Calu3 (cell line): ENCODE measurements at regions of chr11 and their contacts with region 1.

Region 1: DNA sequence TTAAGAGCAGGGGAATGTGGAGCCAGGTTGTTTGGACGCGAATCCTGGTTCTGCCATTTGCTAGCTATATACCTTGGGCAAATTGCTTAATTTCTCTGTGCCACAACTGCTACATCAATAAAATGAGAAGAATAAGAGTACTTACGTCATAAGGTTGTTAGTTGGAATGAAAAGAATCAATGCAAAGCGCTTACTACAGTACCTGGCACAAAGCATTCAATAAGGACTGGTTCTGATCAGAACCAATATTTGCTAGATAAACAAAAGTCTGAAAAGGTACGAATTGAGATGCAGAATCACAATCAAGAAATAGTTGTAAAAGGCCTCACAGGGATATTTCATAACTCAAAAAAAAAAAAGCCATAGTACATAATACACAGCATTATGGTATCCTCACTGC is 11.2 kb downstream of the AMBRA1 start:
- DNase-seq: no peak
- H3K4me3 Mint-ChIP-seq: no peak overlapping the region
- H3K27ac Mint-ChIP-seq: no peak overlapping the region
- H3K4me1 Mint-ChIP-seq: peaks cover 28% of the 10 kb centered on the region
- H3K27me3 Mint-ChIP-seq: no peaks in the 10 kb centered on the region
- CTCF ChIP-seq: no peak

Region 2: DNA sequence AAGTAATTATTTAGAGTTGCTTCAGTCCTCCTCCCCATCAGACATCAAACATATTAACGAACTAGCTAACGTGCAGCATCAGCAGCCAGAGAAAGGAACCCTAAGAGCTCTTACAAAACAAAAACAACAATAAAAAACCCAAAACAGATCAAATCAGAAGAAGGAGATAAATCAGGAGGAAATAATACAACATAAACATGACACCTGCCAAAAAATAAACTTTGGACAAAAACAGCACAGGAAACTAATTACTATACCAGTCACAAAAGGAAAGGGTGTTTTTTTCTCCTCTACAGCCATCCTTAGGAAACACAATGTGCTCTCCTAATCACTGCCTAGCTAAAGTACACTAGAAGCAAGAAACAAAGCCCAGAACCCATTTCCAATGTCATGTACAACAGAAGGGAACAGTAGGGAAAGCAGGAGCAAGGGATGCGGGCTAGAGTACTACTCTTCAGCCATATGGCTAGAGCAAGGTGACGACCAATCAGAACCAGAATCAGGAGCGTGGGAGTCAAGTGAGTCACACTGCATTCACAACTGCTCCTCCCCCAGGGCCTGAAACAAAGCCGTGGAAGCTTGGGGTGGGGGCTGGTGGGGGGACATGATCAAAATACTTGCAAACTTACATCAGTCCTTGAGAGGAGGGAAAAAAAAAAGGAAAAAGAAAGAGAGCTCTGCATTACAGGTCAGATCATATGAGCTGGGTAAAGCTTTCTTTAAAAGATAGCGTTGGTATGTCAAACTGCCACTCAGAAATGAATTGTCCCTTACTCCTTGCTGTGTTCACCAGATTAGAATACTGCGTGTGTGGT is 599.7 kb before region 1 on chr11:
- CTCF ChIA-PET with region 1: no interaction called
- intact Hi-C with region 1: no loop called
- DNase-seq: no peak
- H3K4me3 Mint-ChIP-seq: no peak overlapping the region
- H3K27ac Mint-ChIP-seq: no peak overlapping the region
- H3K4me1 Mint-ChIP-seq: no peaks in the 10 kb centered on the region
- H3K27me3 Mint-ChIP-seq: no peaks in the 10 kb centered on the region
- CTCF ChIP-seq: no peak

Region 3: GRCh38 chr11:46392421-46393230 is 190.0 kb before region 1 on chr11:
- CTCF ChIA-PET with region 1: no interaction called
- intact Hi-C with region 1: no loop called
- DNase-seq: peak; percentile 89
- H3K4me3 Mint-ChIP-seq: peak overlapping the region; percentile 71
- H3K27ac Mint-ChIP-seq: peak overlapping the region; percentile 50
- H3K4me1 Mint-ChIP-seq: peaks cover 26% of the 10 kb centered on the region
- H3K27me3 Mint-ChIP-seq: peaks cover 54% of the 10 kb centered on the region
- CTCF ChIP-seq: no peak

Region 4: GRCh38 chr11:46529095-46529905 is 53.3 kb before region 1 on chr11:
- CTCF ChIA-PET with region 1: no interaction called
- intact Hi-C with region 1: no loop called
- DNase-seq: peak; percentile 78
- H3K4me3 Mint-ChIP-seq: no peak overlapping the region
- H3K27ac Mint-ChIP-seq: no peak overlapping the region
- H3K4me1 Mint-ChIP-seq: peaks cover 5% of the 10 kb centered on the region
- H3K27me3 Mint-ChIP-seq: no peaks in the 10 kb centered on the region
- CTCF ChIP-seq: peak; percentile 93

Region 5: DNA sequence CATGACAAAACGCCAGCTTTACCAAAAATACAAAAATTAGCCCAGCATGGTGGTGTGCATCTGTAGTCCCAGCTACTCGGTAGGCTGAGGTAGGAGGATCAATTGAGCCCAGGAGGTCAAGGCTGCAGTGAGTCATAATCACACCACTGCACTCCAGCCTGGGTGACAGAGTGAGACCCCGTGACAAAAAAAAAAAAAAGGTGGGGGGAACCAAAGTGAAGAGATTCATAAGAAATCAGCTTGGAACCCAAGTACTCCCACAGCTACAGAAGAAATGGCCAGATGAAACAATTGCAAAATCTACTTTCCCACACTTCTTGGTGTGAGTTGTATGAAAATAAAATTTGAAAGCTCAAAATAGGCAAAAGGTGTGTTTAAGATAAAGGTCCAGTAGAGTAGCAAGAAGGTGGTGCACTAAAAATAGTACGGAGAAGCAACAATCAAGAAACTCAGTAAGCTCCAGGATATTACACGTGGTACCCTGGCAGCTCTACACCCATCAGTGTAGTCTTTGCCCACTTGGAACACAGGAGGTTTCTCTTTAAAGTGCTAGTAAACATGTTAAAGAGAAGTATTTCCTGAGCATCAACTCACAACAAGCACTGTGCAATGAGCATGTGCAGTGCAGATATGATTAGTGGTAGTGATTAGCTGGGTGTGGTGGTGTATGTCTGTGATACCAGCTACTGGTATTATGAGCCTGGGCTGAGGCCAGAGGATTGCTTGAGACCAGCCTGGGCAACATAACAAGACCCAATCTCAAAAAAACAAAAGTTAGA is 29.1 kb after region 1 on chr11:
- CTCF ChIA-PET with region 1: interaction called, 10 read pairs
- intact Hi-C with region 1: no loop called
- DNase-seq: no peak
- H3K4me3 Mint-ChIP-seq: no peak overlapping the region
- H3K27ac Mint-ChIP-seq: no peak overlapping the region
- H3K4me1 Mint-ChIP-seq: peaks cover 14% of the 10 kb centered on the region
- H3K27me3 Mint-ChIP-seq: no peaks in the 10 kb centered on the region
- CTCF ChIP-seq: no peak